Gastrocnemius medialis (tissue), 4 donors: ENCODE measurements at regions of chr1 and their contacts with region 1.

Region 1: DNA sequence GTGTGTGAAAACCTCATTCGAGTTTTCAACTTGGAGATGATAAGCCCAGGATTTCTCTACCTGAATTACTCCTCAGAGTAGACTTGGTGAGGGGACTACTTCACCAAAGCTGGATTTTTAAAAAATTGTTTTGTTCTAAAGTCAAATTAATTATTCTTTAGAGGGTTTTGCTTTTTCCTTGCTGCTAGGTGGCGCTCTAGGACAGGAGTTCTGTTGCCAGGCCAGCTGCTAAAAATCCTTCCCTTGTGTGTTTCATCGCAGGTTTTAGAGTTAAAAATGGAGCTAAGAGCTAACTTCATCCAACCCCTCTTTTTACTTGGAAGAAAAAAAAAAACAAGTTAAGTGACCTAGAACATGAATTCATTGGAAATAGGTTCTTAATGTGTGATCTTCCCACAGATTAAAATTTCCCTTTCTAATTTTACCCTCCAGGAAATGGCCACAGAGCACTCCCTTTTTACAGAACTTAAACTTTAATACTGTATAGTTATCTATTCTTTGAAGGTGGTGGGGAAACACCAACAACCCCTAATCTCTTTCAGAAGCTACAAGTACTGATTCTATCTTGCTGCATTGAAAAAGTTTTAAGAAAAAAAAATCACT is 36.7 kb upstream of the FAM163A start:
- DNase-seq: peak in 1 of 2 donors; percentile 9
- ATAC-seq: no peak
- H3K4me3 ChIP-seq: no peak overlapping the region
- H3K27ac ChIP-seq: no peak overlapping the region
- H3K4me1 ChIP-seq: peaks cover 0 to 11% of the 10 kb centered on the region in 2 donors
- H3K27me3 ChIP-seq: no peaks in the 10 kb centered on the region
- CTCF ChIP-seq: peak; percentile 47 to 73 (median 60)
- POLR2A ChIP-seq: no peak

Region 2: DNA sequence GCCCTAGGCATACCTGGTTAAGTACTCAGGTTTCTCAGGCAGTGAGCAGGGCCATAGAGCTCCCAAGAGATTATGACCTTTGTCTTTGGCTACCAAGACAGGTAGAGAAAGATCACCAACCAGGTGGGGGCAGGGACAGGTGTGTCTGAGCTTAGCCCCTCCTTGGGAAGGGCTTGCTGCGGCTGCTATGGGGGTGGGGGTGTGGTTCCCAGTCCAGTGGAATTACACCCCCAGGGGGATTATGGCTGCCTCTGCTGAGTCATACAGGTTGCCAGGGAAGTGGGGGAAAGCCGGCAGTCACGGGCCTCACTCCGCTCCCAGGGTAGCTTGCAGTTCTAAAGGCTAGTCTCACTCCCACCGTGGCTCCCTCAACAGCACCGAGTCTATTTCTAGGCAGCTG is 28.5 kb before region 1 on chr1:
- in situ Hi-C with region 1: no loop called
- intact Hi-C with region 1: no loop called
- DNase-seq: no peak
- ATAC-seq: no peak
- H3K4me3 ChIP-seq: no peak overlapping the region
- H3K27ac ChIP-seq: no peak overlapping the region
- H3K4me1 ChIP-seq: no peaks in the 10 kb centered on the region
- H3K27me3 ChIP-seq: no peaks in the 10 kb centered on the region
- CTCF ChIP-seq: no peak
- POLR2A ChIP-seq: no peak

Region 3: DNA sequence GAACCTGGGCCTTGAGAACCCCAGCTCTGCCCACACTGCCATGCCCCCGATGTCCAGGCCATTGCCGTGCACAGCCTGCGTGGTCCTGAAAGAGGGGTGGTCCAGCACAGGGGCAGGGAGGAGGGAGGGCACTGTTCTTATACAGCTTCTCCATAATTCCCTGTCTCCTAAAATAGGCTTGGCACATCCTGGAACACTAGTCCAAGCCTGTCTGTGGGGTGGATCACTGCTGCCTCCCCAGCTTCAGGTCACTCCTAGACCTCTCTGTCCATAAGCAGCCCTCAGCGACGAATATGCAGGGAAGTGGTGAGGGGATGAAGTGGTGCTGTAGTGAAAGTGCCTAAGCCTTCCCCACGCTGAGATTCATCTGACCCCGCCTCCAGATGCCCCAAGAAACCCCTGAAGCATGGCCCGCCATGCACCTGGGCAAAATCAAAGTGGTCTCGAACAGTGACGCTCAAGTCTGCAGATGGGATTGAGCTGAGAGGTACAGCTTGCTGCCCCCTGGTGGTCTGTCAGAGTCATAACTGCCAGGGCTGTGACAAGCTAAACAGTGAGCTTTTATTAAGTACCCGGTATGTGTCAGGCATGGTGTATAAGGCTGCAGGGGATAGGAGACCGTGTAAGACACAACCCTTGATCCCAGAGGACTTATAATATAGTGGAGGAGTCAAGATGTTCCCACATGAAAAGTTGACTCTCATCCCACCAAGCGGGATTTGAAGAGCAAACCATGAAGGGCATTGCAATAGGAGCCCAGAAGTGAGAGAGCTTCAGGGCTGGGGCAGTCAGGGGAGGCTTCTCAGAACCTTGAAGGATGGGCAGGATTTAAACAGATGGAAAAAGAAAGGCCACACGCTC is 103.3 kb after region 1 on chr1:
- in situ Hi-C with region 1: loop called (anchors 5 to 10 kb)
- intact Hi-C with region 1: loop called (anchors 1 kb)
- DNase-seq: no peak
- ATAC-seq: peak; percentile 45 to 58
- H3K4me3 ChIP-seq: no peak overlapping the region
- H3K27ac ChIP-seq: no peak overlapping the region
- H3K4me1 ChIP-seq: peaks cover 5 to 8% of the 10 kb centered on the region in 2 donors
- H3K27me3 ChIP-seq: peaks cover 4 to 9% (median 5%) of the 10 kb centered on the region in 3 donors
- CTCF ChIP-seq: peak; percentile 71 to 91 (median 83)
- POLR2A ChIP-seq: no peak

Region 4: GRCh38 chr1:180080433-180080832 is 374.0 kb after region 1 on chr1:
- in situ Hi-C with region 1: no loop called
- intact Hi-C with region 1: no loop called
- DNase-seq: no peak
- ATAC-seq: peak; percentile 58 to 87
- H3K4me3 ChIP-seq: no peak overlapping the region
- H3K27ac ChIP-seq: peak overlapping the region in 3 of 4 donors; percentile 19 to 57 (median 35)
- H3K4me1 ChIP-seq: no peaks in the 10 kb centered on the region
- H3K27me3 ChIP-seq: no peaks in the 10 kb centered on the region
- CTCF ChIP-seq: no peak
- POLR2A ChIP-seq: no peak

Region 5: GRCh38 chr1:180482425-180483275 is 776.2 kb after region 1 on chr1:
- in situ Hi-C with region 1: no loop called
- intact Hi-C with region 1: loop called (anchors 5 kb)
- DNase-seq: no peak
- ATAC-seq: no peak
- H3K4me3 ChIP-seq: no peak overlapping the region
- H3K27ac ChIP-seq: no peak overlapping the region
- H3K4me1 ChIP-seq: peaks cover 0 to 10% of the 10 kb centered on the region in 2 donors
- H3K27me3 ChIP-seq: no peaks in the 10 kb centered on the region
- CTCF ChIP-seq: peak; percentile 31 to 76 (median 50)
- POLR2A ChIP-seq: no peak